ENCODE measurements at regions of chr3 and their contacts with region 1.

Region 1: DNA sequence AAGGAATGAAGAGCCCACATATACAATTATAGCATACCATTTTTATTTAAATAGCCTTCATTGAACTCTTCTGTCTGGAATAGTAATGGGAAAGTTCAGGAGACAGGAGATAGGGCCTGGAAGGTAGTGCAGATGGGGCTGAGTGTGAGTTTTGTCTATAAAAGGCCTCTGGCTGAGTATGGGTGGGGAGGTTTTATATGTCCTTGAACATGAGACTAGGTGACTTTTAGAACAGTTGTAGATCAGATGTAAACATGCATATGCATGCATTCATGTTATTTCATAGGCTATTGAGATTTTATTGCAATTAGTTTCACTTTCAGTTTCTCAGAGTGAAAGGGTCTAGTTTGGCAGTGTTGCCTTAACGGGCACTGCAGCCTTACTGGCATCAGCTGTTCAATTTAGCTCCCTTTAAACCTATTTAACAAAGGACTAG is 27.1 kb downstream of the CGGBP1 start:
- DNase-seq: peak in 7 of 9 donors; percentile 29 to 54 (median 38)
- ATAC-seq: peak; percentile 76
- H3K4me3 ChIP-seq: peak overlapping the region; percentile 59
- H3K4me3 Mint-ChIP-seq: peak overlapping the region; percentile 78 to 91 (median 86)
- H3K27ac ChIP-seq: peak overlapping the region; percentile 66
- H3K27ac Mint-ChIP-seq: peak overlapping the region; percentile 82 to 95 (median 88)
- H3K4me1 ChIP-seq: peaks cover 11 to 17% of the 10 kb centered on the region in 2 donors
- H3K4me1 Mint-ChIP-seq: peaks cover 10 to 50% (median 48%) of the 10 kb centered on the region in 7 donors
- H3K27me3 ChIP-seq: no peaks in the 10 kb centered on the region
- H3K27me3 Mint-ChIP-seq: peaks cover 0 to under 1% (median 0%) of the 10 kb centered on the region in 5 donors

Region 2: DNA sequence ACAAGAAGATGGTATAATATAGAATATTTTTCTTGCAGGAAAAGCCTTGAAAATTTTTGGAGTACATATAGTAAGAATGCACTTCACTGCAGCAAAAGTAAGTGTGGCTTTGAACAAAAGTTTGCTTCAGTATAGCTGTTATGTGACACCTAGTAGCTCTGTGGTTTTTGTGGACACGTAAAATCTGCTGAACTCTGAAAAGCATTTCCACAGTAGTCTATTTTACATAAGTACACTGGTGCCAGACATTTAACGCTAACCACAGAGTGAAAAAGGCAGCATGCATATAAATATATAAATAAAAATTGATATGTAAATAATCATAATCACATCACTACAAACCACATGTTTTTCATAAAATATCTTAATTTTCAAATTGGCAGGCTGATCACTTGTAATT is 12.6 kb before region 1 on chr3:
- CTCF ChIA-PET with region 1: no interaction called
- POLR2A ChIA-PET with region 1: interaction called, 4 read pairs
- intact Hi-C with region 1: loop called in 1 of 2 experiments (anchors 1 kb)
- DNase-seq: no peak
- ATAC-seq: peak; percentile 63
- H3K4me3 ChIP-seq: no peak overlapping the region
- H3K4me3 Mint-ChIP-seq: peak overlapping the region in 1 of 10 donors; percentile 13
- H3K27ac ChIP-seq: no peak overlapping the region
- H3K27ac Mint-ChIP-seq: no peak overlapping the region
- H3K4me1 ChIP-seq: peaks cover 0 to 14% of the 10 kb centered on the region in 2 donors
- H3K4me1 Mint-ChIP-seq: peaks cover 0 to 23% (median 11%) of the 10 kb centered on the region in 7 donors
- H3K27me3 ChIP-seq: no peaks in the 10 kb centered on the region
- H3K27me3 Mint-ChIP-seq: peaks cover 0 to 19% (median 5%) of the 10 kb centered on the region in 5 donors

Region 3: DNA sequence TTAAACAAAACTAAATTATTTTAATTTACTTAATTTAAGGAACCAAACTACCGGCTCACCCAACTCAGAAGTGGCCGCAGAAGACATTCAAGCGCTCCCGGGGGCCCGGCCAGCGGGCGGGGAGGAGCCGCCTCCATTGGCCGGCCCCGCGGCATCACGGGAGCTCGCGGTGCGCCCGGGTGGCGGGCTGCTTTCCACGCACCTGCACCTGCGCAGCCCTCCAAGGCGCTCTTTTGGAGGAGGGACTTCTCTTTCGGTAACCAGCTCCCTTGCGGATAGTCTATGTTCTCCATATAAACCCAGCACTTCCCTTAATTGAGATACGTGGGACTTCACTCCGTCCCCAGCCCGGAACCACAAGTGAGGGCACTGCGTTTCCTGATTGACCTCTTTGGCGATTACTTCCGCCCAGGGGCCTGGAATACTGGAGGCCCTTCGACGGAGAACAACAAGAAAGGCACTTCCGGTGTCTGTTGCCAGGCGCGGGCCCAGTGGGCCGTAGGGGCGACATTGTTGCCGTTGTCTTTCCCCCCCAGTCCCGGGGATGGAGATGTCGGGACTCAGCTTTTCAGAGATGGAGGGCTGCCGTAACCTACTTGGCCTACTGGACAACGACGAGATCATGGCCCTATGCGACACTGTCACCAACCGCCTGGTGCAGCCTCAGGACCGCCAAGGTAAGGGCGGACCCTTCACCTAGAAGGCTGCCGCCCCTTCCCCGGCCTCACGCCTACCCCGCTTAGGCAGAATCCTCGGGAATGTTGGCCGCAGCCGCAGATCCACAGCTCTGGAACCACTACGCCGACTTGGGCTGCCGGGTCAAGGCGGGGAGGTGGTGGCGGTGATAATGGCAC is 118.1 kb after region 1 on chr3 and contains the start of gene C3orf38:
- CTCF ChIA-PET with region 1: no interaction called
- POLR2A ChIA-PET with region 1: interaction called, 10 read pairs
- intact Hi-C with region 1: loop called in 1 of 2 experiments (anchors 1 kb)
- DNase-seq: peak; percentile 74 to 88 (median 85)
- ATAC-seq: peak; percentile 96
- H3K4me3 ChIP-seq: peak within 1 kb of the TSS; percentile 88
- H3K4me3 Mint-ChIP-seq: peak within 1 kb of the TSS; percentile 93 to 99 (median 98)
- H3K27ac ChIP-seq: peak within 1 kb of the TSS; percentile 94
- H3K27ac Mint-ChIP-seq: peak within 1 kb of the TSS; percentile 97 to 99 (median 99)
- H3K4me1 ChIP-seq: peaks cover 13 to 17% of the 10 kb centered on the region in 2 donors
- H3K4me1 Mint-ChIP-seq: peaks cover 16 to 46% (median 43%) of the 10 kb centered on the region in 7 donors
- H3K27me3 ChIP-seq: no peaks in the 10 kb centered on the region
- H3K27me3 Mint-ChIP-seq: no peaks in the 10 kb centered on the region
- total RNA-seq, gene C3orf38: 28.9 to 40.2 (median 34.7) TPM